T-cell (primary cell): ENCODE measurements at regions of chr22 and their contacts with region 1.

Region 1: GRCh38 chr22:37244114-37244921 is at the start of gene RAC2:
- DNase-seq: peak; percentile 74 to 92 (median 86)
- ATAC-seq: peak; percentile 64 to 69 (median 66)
- H3K4me3 ChIP-seq: peak within 1 kb of the TSS; percentile 96 to 97
- H3K4me3 Mint-ChIP-seq: peak within 1 kb of the TSS; percentile 93 to 97 (median 96)
- H3K27ac ChIP-seq: peak within 1 kb of the TSS; percentile 88
- H3K27ac Mint-ChIP-seq: peak within 1 kb of the TSS; percentile 99
- H3K4me1 ChIP-seq: peaks cover 33 to 57% of the 10 kb centered on the region in 2 experiments
- H3K4me1 Mint-ChIP-seq: peaks cover 46 to 54% (median 54%) of the 10 kb centered on the region in 3 donors
- H3K27me3 ChIP-seq: no peaks in the 10 kb centered on the region
- H3K27me3 Mint-ChIP-seq: no peaks in the 10 kb centered on the region
- total RNA-seq, gene RAC2: 353 to 413 (median 385) TPM

Region 2: DNA sequence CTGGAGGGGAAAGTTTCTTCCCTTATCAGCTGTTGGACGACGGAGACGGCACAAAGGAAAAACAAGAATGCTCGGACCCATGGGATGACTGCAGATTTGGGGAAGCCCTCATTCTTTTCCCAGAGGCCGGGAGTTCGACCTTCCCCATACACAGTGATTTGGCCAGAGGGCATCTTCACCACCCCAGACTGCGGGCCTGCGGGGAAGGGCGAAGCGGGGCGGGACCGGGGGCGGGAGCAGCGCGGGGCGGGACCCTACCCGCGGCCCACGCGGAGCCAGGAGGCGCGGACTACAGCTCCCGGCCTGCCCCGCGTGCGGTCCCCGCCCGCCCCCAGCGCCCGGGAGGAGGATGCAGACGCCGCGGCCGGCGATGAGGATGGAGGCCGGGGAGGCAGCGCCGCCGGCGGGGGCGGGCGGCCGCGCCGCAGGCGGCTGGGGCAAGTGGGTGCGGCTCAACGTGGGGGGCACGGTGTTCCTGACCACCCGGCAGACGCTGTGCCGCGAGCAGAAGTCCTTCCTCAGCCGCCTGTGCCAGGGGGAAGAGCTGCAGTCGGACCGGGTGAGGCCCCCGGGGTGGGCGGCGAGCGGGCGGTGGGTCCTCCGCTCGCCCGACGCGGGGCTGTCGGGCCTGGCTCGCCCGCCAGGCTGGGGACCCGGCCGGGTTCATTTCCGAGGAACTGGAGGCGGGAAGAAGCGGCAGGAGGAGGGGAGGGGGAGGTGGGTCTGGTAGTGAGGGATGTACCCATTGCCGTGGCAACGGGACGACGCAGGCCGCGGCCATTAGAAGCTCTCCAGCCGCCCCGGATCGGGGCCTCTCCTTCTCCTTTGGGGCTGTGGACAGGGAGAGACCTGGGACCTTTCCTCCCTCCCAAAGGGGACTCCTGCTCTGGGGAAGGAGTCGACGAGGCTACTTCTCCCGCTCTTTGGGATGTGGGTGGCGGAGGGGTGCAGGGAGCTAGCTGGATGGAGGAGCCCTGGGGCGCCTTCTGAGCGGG is 192.6 kb before region 1 on chr22 and contains the start of gene KCTD17:
- CTCF ChIA-PET with region 1: no interaction called
- POLR2A ChIA-PET with region 1: no interaction called
- DNase-seq: peak; percentile 43 to 81 (median 64)
- ATAC-seq: peak; percentile 100
- H3K4me3 ChIP-seq: peak within 1 kb of the TSS; percentile 38 to 55
- H3K4me3 Mint-ChIP-seq: peak within 1 kb of the TSS; percentile 68 to 81 (median 72)
- H3K27ac ChIP-seq: no peak within 1 kb of the TSS
- H3K27ac Mint-ChIP-seq: peak within 1 kb of the TSS in 1 of 2 donors; percentile 49
- H3K4me1 ChIP-seq: peaks cover 0 to 22% of the 10 kb centered on the region in 2 experiments
- H3K4me1 Mint-ChIP-seq: peaks cover 14 to 19% (median 18%) of the 10 kb centered on the region in 3 donors
- H3K27me3 ChIP-seq: peaks cover 0 to 2% of the 10 kb centered on the region in 2 experiments
- H3K27me3 Mint-ChIP-seq: no peaks in the 10 kb centered on the region
- total RNA-seq, gene KCTD17: 24.0 to 36.2 (median 35.1) TPM

Region 3: GRCh38 chr22:37199103-37199759 is 45.1 kb before region 1 on chr22:
- CTCF ChIA-PET with region 1: interaction called, 6 read pairs
- POLR2A ChIA-PET with region 1: interaction called in 1 of 2 experiments, 12 read pairs
- DNase-seq: peak; percentile 90 to 100 (median 97)
- ATAC-seq: peak; percentile 93 to 97 (median 95)
- H3K4me3 ChIP-seq: peak overlapping the region; percentile 55 to 78
- H3K4me3 Mint-ChIP-seq: peak overlapping the region; percentile 81 to 86 (median 84)
- H3K27ac ChIP-seq: peak overlapping the region; percentile 94
- H3K27ac Mint-ChIP-seq: peak overlapping the region; percentile 97 to 98
- H3K4me1 ChIP-seq: peaks cover 15 to 54% of the 10 kb centered on the region in 2 experiments
- H3K4me1 Mint-ChIP-seq: peaks cover 37 to 56% (median 47%) of the 10 kb centered on the region in 3 donors
- H3K27me3 ChIP-seq: no peaks in the 10 kb centered on the region
- H3K27me3 Mint-ChIP-seq: no peaks in the 10 kb centered on the region

Region 4: GRCh38 chr22:37218771-37219411 is 25.4 kb before region 1 on chr22:
- CTCF ChIA-PET with region 1: interaction called in 1 of 2 experiments, 11 read pairs
- POLR2A ChIA-PET with region 1: interaction called in 1 of 2 experiments, 4 read pairs
- DNase-seq: peak; percentile 58 to 92 (median 77)
- ATAC-seq: peak; percentile 85 to 88 (median 87)
- H3K4me3 ChIP-seq: peak overlapping the region; percentile 45 to 92
- H3K4me3 Mint-ChIP-seq: peak overlapping the region; percentile 65 to 70 (median 69)
- H3K27ac ChIP-seq: peak overlapping the region; percentile 80
- H3K27ac Mint-ChIP-seq: peak overlapping the region; percentile 90 to 98
- H3K4me1 ChIP-seq: peaks cover 59 to 77% of the 10 kb centered on the region in 2 experiments
- H3K4me1 Mint-ChIP-seq: peaks cover 85 to 100% (median 90%) of the 10 kb centered on the region in 3 donors
- H3K27me3 ChIP-seq: no peaks in the 10 kb centered on the region
- H3K27me3 Mint-ChIP-seq: no peaks in the 10 kb centered on the region

Region 5: GRCh38 chr22:37229805-37230672 is 14.3 kb before region 1 on chr22:
- CTCF ChIA-PET with region 1: interaction called, 3 to 26 read pairs
- POLR2A ChIA-PET with region 1: interaction called, 4 to 5 read pairs
- DNase-seq: peak; percentile 74 to 95 (median 91)
- ATAC-seq: peak; percentile 80 to 87 (median 81)
- H3K4me3 ChIP-seq: peak overlapping the region; percentile 34 to 62
- H3K4me3 Mint-ChIP-seq: peak overlapping the region; percentile 66 to 97 (median 71)
- H3K27ac ChIP-seq: peak overlapping the region; percentile 95
- H3K27ac Mint-ChIP-seq: peak overlapping the region; percentile 97 to 99
- H3K4me1 ChIP-seq: peaks cover 73 to 96% of the 10 kb centered on the region in 2 experiments
- H3K4me1 Mint-ChIP-seq: peaks cover 87 to 92% (median 89%) of the 10 kb centered on the region in 3 donors
- H3K27me3 ChIP-seq: no peaks in the 10 kb centered on the region
- H3K27me3 Mint-ChIP-seq: no peaks in the 10 kb centered on the region

Region 6: GRCh38 chr22:37260901-37261336 is 16.6 kb after region 1 on chr22:
- CTCF ChIA-PET with region 1: interaction called, 3 to 63 read pairs
- POLR2A ChIA-PET with region 1: interaction called in 1 of 2 experiments, 3 read pairs
- DNase-seq: peak in 30 of 35 experiments; percentile 31 to 79 (median 53)
- ATAC-seq: peak; percentile 70 to 81 (median 76)
- H3K4me3 ChIP-seq: no peak overlapping the region
- H3K4me3 Mint-ChIP-seq: peak overlapping the region in 1 of 3 donors; percentile 5
- H3K27ac ChIP-seq: no peak overlapping the region
- H3K27ac Mint-ChIP-seq: peak overlapping the region; percentile 50 to 53
- H3K4me1 ChIP-seq: peaks cover 2 to 24% of the 10 kb centered on the region in 2 experiments
- H3K4me1 Mint-ChIP-seq: peaks cover 18 to 25% (median 18%) of the 10 kb centered on the region in 3 donors
- H3K27me3 ChIP-seq: peaks cover 0 to 3% of the 10 kb centered on the region in 2 experiments
- H3K27me3 Mint-ChIP-seq: peaks cover 0 to 1% of the 10 kb centered on the region in 2 donors